GM12878 (cell line): ENCODE measurements at regions of chr2 and their contacts with region 1.

Region 1: GRCh38 chr2:231674587-231675338 is 33.6 kb upstream of the PTMA start:
- DNase-seq: no peak
- ATAC-seq: peak; percentile 52
- H3K4me3 ChIP-seq: no peak overlapping the region
- H3K27ac ChIP-seq: peak overlapping the region; percentile 87
- H3K4me1 ChIP-seq: peaks cover 63% of the 10 kb centered on the region
- H3K27me3 ChIP-seq: no peaks in the 10 kb centered on the region
- CTCF ChIP-seq: peak; percentile 85 to 93 (median 87)
- EP300 ChIP-seq: 0 out of 4 replicates have a peak, but pooled peaks of 1 of the 2 experiments have one; percentile 20
- POLR2A ChIP-seq: no peak; the same call in 1 of the 2 replicates
- RAD21 ChIP-seq: peak; percentile 82

Region 2: DNA sequence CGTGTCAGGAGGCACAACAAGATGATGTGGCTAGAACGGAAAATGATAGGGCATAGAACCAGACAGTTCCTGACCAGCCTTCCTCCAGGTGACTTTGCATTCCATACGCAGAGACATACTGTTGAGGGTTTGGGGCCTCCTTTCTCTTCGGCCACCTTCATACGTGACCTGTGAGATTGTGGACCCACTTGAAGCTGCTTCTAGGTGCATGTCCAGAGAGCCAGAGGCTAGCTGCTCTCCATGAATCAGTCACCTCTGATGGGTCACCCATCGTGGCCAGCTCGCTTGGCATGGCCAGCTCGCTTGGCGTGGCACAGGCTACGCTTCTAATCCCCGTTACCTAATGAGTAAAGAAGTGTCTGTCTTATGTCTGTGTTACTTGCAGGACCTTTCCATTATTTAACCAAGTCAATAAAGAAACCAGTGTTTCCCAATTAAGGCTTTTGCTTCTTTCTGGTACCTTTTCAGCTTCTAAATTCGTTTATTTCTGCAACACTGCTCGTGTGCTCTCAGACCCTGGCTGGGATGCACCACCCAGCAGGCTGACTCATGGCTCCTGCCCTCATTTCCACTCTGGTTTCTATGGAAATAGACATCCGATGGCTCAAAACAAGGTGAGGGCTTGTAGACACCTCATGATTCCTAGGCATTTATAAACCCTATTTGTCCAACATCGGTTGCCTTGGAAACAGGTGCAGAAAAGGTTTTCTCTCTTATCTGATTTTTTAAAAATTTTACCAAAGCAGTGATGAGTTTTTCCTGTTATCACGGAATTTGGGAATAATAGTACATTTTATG is 365.9 kb before region 1 on chr2:
- CTCF ChIA-PET with region 1: no interaction called
- POLR2A ChIA-PET with region 1: no interaction called
- RAD21 ChIA-PET with region 1: no interaction called
- SMC1A ChIA-PET with region 1: no interaction called
- in situ Hi-C with region 1: no loop called
- intact Hi-C with region 1: no loop called
- DNase-seq: no peak
- ATAC-seq: no peak
- H3K4me3 ChIP-seq: no peak overlapping the region
- H3K27ac ChIP-seq: no peak overlapping the region
- H3K4me1 ChIP-seq: peaks cover 7% of the 10 kb centered on the region
- H3K27me3 ChIP-seq: no peaks in the 10 kb centered on the region
- CTCF ChIP-seq: no peak
- EP300 ChIP-seq: no peak
- POLR2A ChIP-seq: no peak
- RAD21 ChIP-seq: no peak

Region 3: GRCh38 chr2:231604685-231605606 is 69.8 kb before region 1 on chr2:
- CTCF ChIA-PET with region 1: interaction called, 494 read pairs
- POLR2A ChIA-PET with region 1: interaction called, 247 read pairs
- RAD21 ChIA-PET with region 1: interaction called, 353 read pairs
- SMC1A ChIA-PET with region 1: interaction called, 255 read pairs
- in situ Hi-C with region 1: loop called (anchors 5 kb)
- intact Hi-C with region 1: no loop called
- DNase-seq: peak; percentile 83
- ATAC-seq: peak; percentile 84
- H3K4me3 ChIP-seq: peak overlapping the region; percentile 28; the same call in 1 of the 2 replicates
- H3K27ac ChIP-seq: peak overlapping the region; percentile 58
- H3K4me1 ChIP-seq: peaks cover 17% of the 10 kb centered on the region
- H3K27me3 ChIP-seq: no peaks in the 10 kb centered on the region
- CTCF ChIP-seq: peak in 1 of 3 experiments; percentile 27; a peak in 1 of 6 replicates
- EP300 ChIP-seq: peak; percentile 41 to 91; a peak in 3 of 4 replicates
- POLR2A ChIP-seq: no peak; the same call in 1 of the 2 replicates
- RAD21 ChIP-seq: no peak

Region 4: GRCh38 chr2:231627384-231628120 is 47.2 kb before region 1 on chr2:
- CTCF ChIA-PET with region 1: interaction called, 15 read pairs
- POLR2A ChIA-PET with region 1: interaction called, 3 read pairs
- RAD21 ChIA-PET with region 1: no interaction called
- SMC1A ChIA-PET with region 1: interaction called, 4 read pairs
- in situ Hi-C with region 1: no loop called
- intact Hi-C with region 1: no loop called
- DNase-seq: no peak
- ATAC-seq: no peak; the same call in 2 of the 3 replicates
- H3K4me3 ChIP-seq: no peak overlapping the region
- H3K27ac ChIP-seq: no peak overlapping the region
- H3K4me1 ChIP-seq: no peaks in the 10 kb centered on the region
- H3K27me3 ChIP-seq: no peaks in the 10 kb centered on the region; a peak in 1 of 4 replicates
- CTCF ChIP-seq: no peak
- EP300 ChIP-seq: no peak
- POLR2A ChIP-seq: no peak
- RAD21 ChIP-seq: no peak

Region 5: GRCh38 chr2:231655897-231656296 is 18.9 kb before region 1 on chr2:
- CTCF ChIA-PET with region 1: interaction called, 262 read pairs
- POLR2A ChIA-PET with region 1: interaction called, 95 read pairs
- RAD21 ChIA-PET with region 1: interaction called, 86 read pairs
- SMC1A ChIA-PET with region 1: interaction called, 102 read pairs
- in situ Hi-C with region 1: no loop called
- intact Hi-C with region 1: no loop called
- DNase-seq: no peak
- ATAC-seq: no peak
- H3K4me3 ChIP-seq: no peak overlapping the region
- H3K27ac ChIP-seq: no peak overlapping the region
- H3K4me1 ChIP-seq: no peaks in the 10 kb centered on the region
- H3K27me3 ChIP-seq: no peaks in the 10 kb centered on the region
- CTCF ChIP-seq: no peak
- EP300 ChIP-seq: no peak
- POLR2A ChIP-seq: no peak
- RAD21 ChIP-seq: no peak

Region 6: DNA sequence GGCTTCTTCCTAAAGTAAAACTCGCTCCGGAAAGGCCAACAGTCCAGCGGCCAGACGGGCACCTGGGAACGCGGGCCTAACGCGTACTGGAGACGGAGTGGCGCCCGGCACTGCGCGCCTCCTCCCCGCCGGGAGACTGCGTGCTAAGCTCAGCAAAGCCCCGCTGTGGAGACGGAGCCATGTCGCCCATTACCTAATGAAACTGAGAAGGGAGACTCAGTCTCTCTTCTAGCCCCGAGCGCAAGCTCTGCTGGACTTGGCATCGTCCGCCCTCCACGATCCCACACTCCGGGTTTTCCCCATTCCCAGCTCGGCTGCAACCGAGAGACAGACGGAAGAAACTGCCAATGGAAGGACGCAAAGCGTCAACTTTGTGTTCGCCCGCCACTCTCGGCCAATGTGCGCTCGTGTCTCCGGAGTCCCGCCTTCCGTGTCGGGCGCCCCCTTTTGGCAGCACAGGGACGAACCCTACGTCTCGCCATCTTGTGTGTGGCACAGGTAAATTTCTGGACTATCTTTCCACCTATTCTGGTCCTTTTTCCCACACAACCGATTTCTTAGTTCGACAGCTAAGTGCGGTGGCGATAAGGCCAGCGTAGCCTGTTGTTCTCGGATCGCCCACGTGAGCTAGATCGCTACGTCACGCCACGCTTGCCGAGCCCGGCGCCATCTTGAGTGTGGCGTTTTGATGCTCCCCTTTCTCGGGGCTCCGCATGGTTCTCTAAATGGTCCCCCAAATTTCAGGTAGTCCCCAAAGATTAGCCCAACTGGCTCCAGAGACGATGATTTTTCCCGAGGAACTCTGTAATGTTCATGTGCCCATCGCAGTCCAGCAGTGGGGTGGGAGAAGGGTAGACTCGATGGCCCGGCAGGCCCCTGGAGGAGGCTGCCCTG is 32.2 kb after region 1 on chr2:
- CTCF ChIA-PET with region 1: interaction called, 811 read pairs
- POLR2A ChIA-PET with region 1: interaction called, 102 read pairs
- RAD21 ChIA-PET with region 1: interaction called, 463 read pairs
- SMC1A ChIA-PET with region 1: interaction called, 343 read pairs
- in situ Hi-C with region 1: no loop called
- intact Hi-C with region 1: loop called (anchors 1 kb)
- DNase-seq: peak; percentile 95
- ATAC-seq: peak; percentile 61
- H3K4me3 ChIP-seq: peak overlapping the region; percentile 91
- H3K27ac ChIP-seq: peak overlapping the region; percentile 100
- H3K4me1 ChIP-seq: peaks cover 14% of the 10 kb centered on the region
- H3K27me3 ChIP-seq: no peaks in the 10 kb centered on the region
- CTCF ChIP-seq: peak; percentile 91 to 99 (median 99); a peak in 5 of 6 replicates
- EP300 ChIP-seq: no peak
- POLR2A ChIP-seq: no peak
- RAD21 ChIP-seq: no peak

Region 7: DNA sequence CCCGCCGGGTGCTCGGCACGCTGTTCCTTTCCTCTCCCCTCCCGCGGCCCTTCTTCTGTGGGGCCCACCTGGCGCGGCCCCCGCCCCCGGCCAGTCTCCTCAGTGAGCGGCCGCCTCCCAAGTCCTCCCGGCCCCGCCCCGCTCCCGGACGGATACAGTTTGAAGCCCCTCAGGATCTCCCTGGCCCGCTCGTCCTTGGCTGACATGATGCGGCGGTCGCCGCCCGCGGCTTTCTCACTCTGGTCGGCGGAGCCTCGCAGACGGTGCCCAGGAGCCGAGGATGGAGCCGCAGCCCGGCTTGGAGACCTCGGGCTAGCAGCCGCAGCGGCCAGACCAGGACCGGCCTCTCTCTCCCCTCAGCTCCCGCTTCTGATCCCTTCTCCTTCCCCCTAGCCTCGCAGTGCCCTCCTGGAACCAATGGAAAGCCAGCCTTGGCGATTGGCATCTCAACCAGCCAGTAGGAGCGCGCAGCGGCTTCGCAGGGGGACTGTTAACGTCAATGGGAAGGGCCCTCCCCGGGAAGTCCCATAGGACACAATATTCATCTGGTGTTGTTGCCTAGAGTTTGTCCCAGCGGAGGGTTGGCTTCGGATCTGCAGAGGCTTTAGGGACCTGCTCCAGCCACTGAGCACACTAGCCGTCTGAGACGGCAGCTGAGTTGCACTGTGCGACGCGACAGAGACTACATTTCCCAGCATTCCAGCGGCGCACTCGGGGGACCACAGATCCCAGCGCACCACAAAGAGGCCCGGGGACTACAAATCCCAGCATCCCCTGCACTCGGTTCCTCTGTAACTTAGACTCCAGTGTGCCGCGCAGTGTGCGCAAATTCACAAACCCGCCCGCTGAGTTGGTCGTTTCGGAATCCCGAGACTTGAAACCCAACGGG is 106.4 kb after region 1 on chr2 and contains the start of gene PDE6D:
- CTCF ChIA-PET with region 1: interaction called, 31 read pairs
- POLR2A ChIA-PET with region 1: interaction called, 6 read pairs
- RAD21 ChIA-PET with region 1: interaction called, 9 read pairs
- SMC1A ChIA-PET with region 1: interaction called, 20 read pairs
- in situ Hi-C with region 1: no loop called
- intact Hi-C with region 1: loop called (anchors 2 kb)
- DNase-seq: peak; percentile 97
- ATAC-seq: peak; percentile 94
- H3K4me3 ChIP-seq: peak within 1 kb of the TSS; percentile 91
- H3K27ac ChIP-seq: peak within 1 kb of the TSS; percentile 78
- H3K4me1 ChIP-seq: peaks cover 10% of the 10 kb centered on the region
- H3K27me3 ChIP-seq: no peaks in the 10 kb centered on the region
- CTCF ChIP-seq: no peak
- EP300 ChIP-seq: peak; percentile 22 to 55; a peak in 2 of 4 replicates
- POLR2A ChIP-seq: peak; percentile 93
- RAD21 ChIP-seq: no peak
- polyA plus RNA-seq, gene PDE6D: 8.2 to 15.9 TPM